GM23248 (cell line): ENCODE measurements at regions of chr17 and their contacts with region 1.

Region 1: DNA sequence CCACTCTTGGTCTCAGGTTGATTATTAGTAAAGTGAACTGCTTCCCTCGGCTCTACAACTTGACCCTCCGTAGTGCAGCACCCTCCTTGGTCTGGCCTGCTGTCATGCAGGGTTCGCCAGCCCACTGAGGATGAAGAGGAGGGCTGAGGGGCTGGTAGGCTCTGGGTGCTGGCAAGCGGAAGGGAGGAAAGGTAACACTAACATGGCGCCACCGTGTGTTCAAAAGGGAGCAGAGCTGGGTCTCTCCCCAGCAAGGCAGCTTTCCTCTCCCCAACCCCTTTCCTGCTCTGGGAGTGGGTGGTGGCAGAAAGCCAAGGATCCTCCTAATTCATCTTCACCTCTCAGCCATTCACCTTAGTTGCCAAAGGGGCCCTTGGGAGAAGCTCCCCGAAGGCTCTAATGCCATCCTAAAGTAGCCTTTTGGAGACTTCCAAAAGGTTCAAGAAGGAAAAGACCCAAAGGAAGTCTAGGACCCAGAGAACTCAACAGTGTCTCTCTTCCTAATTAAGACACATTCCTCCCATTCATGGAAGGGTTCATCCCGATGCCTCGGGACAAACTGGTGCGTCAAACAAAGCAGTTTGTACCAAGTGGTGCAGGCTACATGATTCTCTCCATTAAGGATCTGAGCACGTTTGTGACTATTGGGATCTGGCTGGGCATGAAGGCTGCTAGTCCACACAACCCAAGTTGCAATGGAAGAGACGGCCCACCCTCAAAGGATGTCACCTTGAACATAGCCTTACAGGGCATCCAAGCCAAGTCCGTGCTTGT is 90.8 kb upstream of the TOB1 start:
- DNase-seq: peak; percentile 81
- H3K4me3 ChIP-seq: no peak overlapping the region
- H3K27ac ChIP-seq: no peak overlapping the region
- H3K4me1 ChIP-seq: peaks cover 9% of the 10 kb centered on the region
- H3K27me3 ChIP-seq: no peaks in the 10 kb centered on the region

Region 2: DNA sequence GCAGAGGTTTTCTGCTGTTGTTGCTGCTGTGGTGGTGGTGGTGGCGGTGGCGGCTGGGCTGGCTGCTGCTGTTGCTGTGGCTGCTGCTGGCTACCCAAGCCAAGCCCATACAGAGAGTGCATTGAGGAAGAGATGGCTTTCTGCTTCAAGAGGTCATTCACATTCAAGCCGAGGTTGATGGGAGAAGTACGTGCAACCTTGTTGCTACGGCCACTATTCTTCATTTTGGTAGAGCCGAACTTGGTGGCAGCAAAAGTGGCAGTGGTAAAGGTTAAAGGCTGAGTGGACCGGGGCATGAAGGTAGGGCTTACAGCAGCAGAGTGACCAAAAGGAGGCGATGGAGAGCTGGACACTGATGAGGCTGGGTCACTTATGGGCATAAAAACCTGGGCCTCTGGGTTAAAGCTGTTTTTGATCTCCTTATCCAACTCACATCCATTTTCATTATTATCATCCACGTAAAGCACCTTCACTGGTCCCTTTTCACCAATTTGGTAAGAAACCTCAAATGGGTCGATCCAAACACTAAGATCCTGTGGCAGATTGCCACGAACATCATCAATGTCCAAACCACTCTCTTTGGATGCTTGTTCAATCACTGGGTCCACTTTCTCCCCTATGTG is 93.6 kb before region 1 on chr17:
- in situ Hi-C with region 1: loop called (anchors 5 kb)
- DNase-seq: peak; percentile 59
- H3K4me3 ChIP-seq: peak overlapping the region; percentile 92
- H3K27ac ChIP-seq: peak overlapping the region; percentile 75; the same call in 1 of the 2 replicates
- H3K4me1 ChIP-seq: peaks cover 29% of the 10 kb centered on the region
- H3K27me3 ChIP-seq: no peaks in the 10 kb centered on the region

Region 3: DNA sequence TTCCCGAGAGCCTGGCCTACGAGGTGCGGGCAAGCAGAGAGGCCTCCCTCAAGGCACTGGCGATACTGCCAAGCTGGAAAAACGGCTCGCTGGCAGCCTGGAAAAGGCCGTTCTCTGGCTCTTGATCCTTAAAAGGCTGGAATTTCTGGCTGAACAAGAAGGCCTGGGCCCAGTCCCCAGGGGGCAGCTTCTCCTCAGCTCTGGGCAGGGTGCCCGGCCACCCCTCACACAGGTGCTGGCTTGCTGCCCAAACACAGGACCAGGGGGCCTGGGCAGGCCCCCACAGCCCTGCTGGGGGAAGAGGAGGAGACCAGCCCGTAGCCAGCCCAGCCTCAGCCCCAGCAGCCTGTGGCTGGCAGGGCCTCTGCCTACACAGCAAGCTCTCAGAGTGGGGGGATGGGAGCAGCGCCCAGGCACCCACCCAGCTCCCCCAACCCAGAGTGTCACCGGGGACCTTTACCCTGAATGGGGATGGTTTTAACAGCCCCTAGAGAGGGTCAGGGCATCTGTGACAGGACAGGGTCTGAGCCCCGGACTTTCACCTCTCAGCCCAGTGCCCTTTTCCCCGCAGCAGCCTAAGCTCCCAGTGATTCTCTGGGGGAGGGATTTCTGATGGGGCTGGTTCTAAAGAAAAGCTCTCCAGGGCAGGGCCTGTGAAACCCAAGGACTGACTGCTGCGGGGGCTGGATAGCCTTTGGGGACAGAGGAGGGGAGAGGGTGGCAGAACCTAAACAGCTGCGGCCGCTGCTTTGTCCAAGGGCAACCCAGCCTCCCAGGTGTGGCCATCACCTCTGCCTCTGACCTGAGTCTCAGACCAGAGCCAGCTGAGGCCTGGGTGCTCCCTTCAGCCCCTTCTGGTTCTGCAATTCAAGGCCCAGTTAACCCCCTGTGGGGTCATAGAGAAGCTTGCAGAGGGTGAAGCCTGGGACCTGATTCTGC is 52.1 kb before region 1 on chr17:
- in situ Hi-C with region 1: no loop called
- DNase-seq: peak; percentile 27
- H3K4me3 ChIP-seq: no peak overlapping the region
- H3K27ac ChIP-seq: no peak overlapping the region
- H3K4me1 ChIP-seq: 0 out of 2 replicates have a peak, but pooled peaks cover 6% of the 10 kb centered on the region
- H3K27me3 ChIP-seq: no peaks in the 10 kb centered on the region

Region 4: DNA sequence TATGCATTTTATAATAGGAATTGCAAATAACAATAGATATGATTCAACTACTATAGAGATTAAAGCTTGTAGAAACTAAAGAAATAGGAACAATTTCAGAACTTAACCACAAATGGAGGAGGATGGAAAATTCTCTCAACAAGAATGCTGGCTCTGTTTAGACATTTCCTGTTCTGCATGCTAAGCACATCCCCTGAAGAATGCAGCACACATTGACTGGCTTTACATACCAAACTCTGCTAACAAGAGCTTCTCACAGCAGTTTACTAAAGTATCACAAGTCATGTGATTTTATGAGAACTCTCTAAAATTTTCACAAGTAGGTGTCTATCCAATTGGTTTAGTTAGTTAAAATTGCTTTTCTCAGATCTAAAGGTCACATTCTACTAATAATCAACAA is 78.5 kb after region 1 on chr17:
- in situ Hi-C with region 1: no loop called
- DNase-seq: peak; percentile 89
- H3K4me3 ChIP-seq: no peak overlapping the region
- H3K27ac ChIP-seq: peak overlapping the region; percentile 80
- H3K4me1 ChIP-seq: peaks cover 17% of the 10 kb centered on the region
- H3K27me3 ChIP-seq: no peaks in the 10 kb centered on the region